B cell (primary cell): ENCODE measurements at regions of chr2 and their contacts with region 1.

Region 1: DNA sequence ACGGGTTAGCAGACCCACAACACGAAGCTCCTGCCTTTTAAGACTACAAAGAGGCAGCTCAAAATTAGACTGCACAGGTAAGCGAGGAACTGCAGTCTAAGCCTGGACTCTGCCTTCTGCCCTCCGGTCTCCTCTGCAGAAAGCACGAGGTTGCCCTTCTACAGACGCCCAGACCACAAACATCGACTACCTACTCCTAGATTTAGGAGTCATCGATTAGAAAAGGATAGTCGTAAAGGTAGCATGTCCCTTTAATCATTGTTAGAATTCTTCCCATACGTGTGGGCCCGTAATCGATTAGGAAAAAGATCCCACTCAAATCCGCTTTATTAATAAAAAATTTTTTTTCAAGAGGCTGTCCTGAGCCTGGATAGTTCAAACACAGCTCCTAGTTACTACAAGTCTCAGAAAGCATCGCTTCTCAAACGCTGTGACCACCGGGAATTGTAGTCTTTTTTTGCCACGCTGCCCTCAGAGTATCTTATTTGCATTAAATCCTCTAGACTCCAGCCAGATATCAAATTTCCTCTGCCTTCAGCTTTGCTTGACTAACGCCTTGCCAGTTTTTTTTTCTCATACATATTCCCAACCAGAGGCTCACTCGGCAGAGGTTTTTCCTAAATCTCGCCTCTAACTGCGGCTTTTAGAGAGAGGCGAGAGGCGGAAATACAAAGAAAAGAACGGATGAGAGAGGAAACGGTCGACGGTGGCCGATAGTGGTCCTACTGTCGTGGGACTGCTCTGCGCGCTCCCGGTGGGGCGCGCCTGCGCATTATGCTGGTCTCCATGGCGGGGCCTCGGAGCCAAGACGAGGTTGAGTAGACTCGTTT is at the starts of genes CARF and WDR12:
- DNase-seq: peak; percentile 96
- ATAC-seq: peak; percentile 81
- H3K4me3 ChIP-seq: peak within 1 kb of the TSS; percentile 52 to 100 (median 97)
- H3K4me3 Mint-ChIP-seq: peak within 1 kb of the TSS; percentile 99
- H3K27ac ChIP-seq: peak within 1 kb of the TSS; percentile 67 to 83
- H3K27ac Mint-ChIP-seq: peak within 1 kb of the TSS; percentile 99
- H3K4me1 ChIP-seq: peaks cover 5 to 11% of the 10 kb centered on the region in 2 donors
- H3K4me1 Mint-ChIP-seq: peaks cover 24% of the 10 kb centered on the region
- H3K27me3 ChIP-seq: no peaks in the 10 kb centered on the region
- H3K27me3 Mint-ChIP-seq: no peaks in the 10 kb centered on the region
- CTCF ChIP-seq: no peak
- total RNA-seq, gene CARF: 27.5 and 28.4 TPM in 2 replicates
- total RNA-seq, gene WDR12: 17.4 and 20.8 TPM in 2 replicates

Region 2: DNA sequence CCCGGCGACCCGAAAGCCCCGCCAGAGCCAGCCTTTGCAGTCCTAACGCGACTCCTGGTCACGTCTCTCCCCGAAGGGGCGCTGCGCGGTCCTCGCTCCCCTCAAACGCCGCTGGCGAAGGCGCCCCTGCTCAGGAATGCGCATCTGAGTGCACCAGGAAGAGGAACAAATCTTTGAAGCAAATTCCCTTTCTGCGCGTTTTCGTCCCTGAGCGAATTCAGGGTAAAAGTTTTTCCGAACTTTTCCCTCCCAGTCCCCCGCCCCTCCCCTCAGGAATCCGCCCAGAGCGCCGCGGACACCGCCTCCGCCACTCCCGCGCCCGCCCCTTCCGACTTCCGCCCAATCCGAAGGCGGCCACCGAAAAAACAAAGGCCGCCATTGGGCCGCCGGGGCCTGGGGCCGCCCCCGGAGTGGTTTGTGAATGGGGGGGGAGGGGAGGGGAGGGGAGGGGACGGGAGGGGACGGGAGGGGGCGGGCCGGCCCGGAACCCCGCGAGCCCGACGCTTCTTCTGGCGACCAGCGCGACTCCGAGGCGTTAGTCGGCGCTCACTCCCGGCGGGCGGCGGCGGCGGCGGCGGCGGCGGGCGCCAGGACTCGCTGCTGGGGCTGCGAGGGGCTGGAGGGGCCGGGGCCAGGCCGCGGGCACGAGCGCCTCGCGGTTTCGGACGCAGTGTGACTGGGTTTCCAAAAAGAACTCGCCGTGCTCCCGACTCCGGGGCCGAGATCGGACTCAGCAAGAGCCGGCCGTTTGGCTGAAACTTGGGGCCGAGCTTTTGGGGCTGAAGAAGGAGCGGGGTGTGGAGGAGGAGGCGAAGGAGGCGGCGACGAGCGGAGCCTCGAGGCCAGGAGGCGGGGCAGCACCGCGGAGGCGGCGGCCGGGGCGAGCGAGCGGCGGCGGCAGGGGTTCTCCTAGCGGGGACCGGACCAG is 878.1 kb before region 1 on chr2 and contains the start of gene FZD7:
- CTCF ChIA-PET with region 1: no interaction called
- POLR2A ChIA-PET with region 1: no interaction called
- intact Hi-C with region 1: loop called (anchors 10 kb)
- DNase-seq: peak; percentile 90
- ATAC-seq: peak; percentile 85
- H3K4me3 ChIP-seq: peak within 1 kb of the TSS; percentile 63 to 89 (median 75)
- H3K4me3 Mint-ChIP-seq: peak within 1 kb of the TSS; percentile 91
- H3K27ac ChIP-seq: no peak within 1 kb of the TSS
- H3K27ac Mint-ChIP-seq: peak within 1 kb of the TSS; percentile 78
- H3K4me1 ChIP-seq: peaks cover 20 to 25% of the 10 kb centered on the region in 2 donors
- H3K4me1 Mint-ChIP-seq: peaks cover 13% of the 10 kb centered on the region
- H3K27me3 ChIP-seq: peaks cover 0 to 43% (median 32%) of the 10 kb centered on the region in 4 experiments
- H3K27me3 Mint-ChIP-seq: peaks cover 22% of the 10 kb centered on the region
- CTCF ChIP-seq: no peak
- total RNA-seq, gene FZD7: 2.1 TPM in 2 replicates

Region 3: DNA sequence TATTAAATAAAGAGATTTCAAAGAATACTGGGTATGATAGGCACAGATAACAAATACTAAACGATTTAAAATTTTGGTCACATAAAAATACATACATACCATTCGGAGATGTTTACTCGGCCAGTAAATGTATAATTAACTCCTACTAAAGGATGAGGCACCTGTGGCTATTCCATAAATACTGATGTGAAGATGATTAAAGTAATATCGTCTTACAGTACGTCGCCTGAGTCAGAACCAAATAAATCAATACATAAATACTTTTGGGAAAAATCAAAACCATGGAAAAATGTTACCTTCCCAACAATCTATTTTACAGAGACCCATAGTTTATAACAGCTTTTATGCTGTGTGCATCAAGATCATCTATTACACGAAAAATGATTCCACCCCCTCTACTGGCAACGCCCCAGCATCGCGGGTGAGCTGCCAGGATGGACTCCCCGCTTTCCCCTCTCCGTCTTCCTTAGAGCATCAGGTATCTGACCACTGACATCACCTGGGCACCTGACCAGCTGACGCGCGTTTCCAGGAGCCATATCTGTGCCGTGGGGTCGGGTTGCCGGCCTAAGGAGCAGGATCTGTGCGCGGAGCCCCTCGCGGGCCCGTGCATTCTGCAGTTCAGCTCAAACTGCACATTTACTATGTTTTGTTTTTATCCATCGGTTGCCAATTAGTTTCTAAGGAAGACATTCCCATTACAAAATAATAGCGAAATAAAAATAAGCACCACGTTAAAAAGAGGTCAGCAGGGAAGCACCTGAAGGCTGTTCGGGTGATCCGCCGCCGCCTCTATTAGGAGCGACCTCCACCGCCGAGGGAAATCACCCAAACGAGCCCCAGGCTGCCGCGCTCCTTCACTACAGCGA is 41.1 kb before region 1 on chr2:
- CTCF ChIA-PET with region 1: interaction called, 13 read pairs
- POLR2A ChIA-PET with region 1: no interaction called
- intact Hi-C with region 1: loop called (anchors 1 kb)
- DNase-seq: peak; percentile 75
- ATAC-seq: peak; percentile 77
- H3K4me3 ChIP-seq: peak overlapping the region; percentile 46 to 75 (median 71)
- H3K4me3 Mint-ChIP-seq: peak overlapping the region; percentile 96
- H3K27ac ChIP-seq: peak overlapping the region; percentile 35 to 65
- H3K27ac Mint-ChIP-seq: peak overlapping the region; percentile 86
- H3K4me1 ChIP-seq: peaks cover 0 to 4% of the 10 kb centered on the region in 2 donors
- H3K4me1 Mint-ChIP-seq: peaks cover 6% of the 10 kb centered on the region
- H3K27me3 ChIP-seq: no peaks in the 10 kb centered on the region
- H3K27me3 Mint-ChIP-seq: no peaks in the 10 kb centered on the region
- CTCF ChIP-seq: peak; percentile 83

Region 4: DNA sequence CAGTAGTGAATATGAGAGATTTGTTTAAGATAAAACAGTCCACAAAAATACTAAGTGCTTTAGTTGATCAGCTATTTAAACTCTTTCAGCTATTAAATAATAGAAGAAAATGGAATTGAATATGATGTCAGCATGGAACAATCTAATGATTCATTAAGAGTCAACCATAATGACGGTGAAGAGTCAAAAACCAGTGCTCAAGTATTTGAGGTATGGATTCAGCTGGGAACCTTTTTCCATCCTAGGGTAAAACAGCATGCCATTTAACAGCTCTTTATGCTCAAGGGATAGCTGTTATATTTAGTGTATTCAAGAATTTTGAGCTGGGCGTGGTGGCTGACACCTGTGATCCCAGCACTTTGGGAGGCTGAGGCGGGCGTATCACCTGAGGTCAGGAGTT is 30.0 kb after region 1 on chr2:
- CTCF ChIA-PET with region 1: no interaction called
- POLR2A ChIA-PET with region 1: no interaction called
- intact Hi-C with region 1: no loop called
- DNase-seq: no peak
- ATAC-seq: no peak
- H3K4me3 ChIP-seq: no peak overlapping the region
- H3K4me3 Mint-ChIP-seq: no peak overlapping the region
- H3K27ac ChIP-seq: no peak overlapping the region
- H3K27ac Mint-ChIP-seq: no peak overlapping the region
- H3K4me1 ChIP-seq: no peaks in the 10 kb centered on the region
- H3K4me1 Mint-ChIP-seq: no peaks in the 10 kb centered on the region
- H3K27me3 ChIP-seq: no peaks in the 10 kb centered on the region
- H3K27me3 Mint-ChIP-seq: no peaks in the 10 kb centered on the region
- CTCF ChIP-seq: no peak

Region 5: DNA sequence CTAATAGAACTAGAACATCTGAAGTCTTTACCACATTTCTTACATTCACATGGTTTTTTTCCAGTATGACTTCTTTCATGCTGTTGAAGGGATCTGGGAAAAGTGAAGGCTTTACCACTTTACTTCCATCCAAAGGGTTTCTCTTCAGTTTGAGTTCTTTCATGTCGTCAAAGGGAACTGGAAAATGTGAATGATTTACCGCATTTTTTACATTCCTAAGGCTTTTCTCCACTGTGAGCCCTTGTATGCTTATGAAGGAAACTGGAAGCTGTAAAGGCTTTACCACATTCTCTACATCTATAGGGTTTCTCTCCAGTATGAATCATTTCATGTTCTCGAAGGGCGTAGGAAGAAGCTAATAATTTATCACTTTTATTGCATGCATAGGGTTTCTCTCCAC is 149.6 kb after region 1 on chr2:
- CTCF ChIA-PET with region 1: no interaction called
- POLR2A ChIA-PET with region 1: no interaction called
- intact Hi-C with region 1: no loop called
- DNase-seq: no peak
- ATAC-seq: no peak
- H3K4me3 ChIP-seq: no peak overlapping the region
- H3K4me3 Mint-ChIP-seq: no peak overlapping the region
- H3K27ac ChIP-seq: no peak overlapping the region
- H3K27ac Mint-ChIP-seq: no peak overlapping the region
- H3K4me1 ChIP-seq: no peaks in the 10 kb centered on the region
- H3K4me1 Mint-ChIP-seq: no peaks in the 10 kb centered on the region
- H3K27me3 ChIP-seq: no peaks in the 10 kb centered on the region
- H3K27me3 Mint-ChIP-seq: no peaks in the 10 kb centered on the region
- CTCF ChIP-seq: no peak

Region 6: DNA sequence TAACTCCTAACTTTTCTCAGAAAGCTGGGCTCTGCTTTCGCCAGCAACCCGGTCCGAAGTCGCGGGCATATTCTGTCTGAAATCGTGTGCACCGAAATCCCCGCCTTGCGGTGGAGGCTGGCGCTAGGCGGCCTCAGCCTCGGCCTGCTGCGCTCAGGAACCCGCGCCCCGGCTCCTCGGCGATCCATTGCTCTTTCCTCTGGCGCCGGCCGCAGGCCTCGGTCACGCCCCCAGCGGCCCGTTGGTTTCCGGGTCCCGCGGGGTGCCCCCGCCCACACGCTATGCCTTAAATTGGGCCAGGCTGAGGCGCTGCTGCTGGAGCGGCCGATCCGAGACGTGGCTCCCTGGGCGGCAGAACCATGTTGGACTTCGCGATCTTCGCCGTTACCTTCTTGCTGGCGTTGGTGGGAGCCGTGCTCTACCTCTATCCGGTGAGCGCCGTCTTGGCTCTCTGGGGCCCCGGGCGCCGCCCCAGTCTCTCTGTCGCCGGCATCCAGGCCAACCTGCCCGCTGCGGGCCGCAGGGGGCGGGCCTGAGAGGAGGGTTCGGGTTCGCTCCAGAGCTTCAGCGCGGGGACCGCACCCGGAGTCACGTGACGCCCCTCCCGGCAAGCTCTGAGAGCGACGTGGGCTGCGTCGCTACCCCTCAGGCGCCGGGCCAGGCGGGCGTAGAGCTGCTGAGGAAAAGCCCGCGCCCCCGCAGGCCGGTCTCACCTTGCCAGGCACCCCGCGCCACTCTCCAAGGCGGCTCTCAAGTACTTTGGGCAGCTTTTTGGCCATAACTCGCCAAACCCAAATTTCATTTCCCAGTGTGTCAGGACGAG is 327.2 kb after region 1 on chr2 and contains the start of gene CYP20A1:
- CTCF ChIA-PET with region 1: interaction called, 15 read pairs
- POLR2A ChIA-PET with region 1: interaction called, 10 read pairs
- intact Hi-C with region 1: loop called (anchors 1 kb)
- DNase-seq: peak; percentile 98
- ATAC-seq: peak; percentile 86
- H3K4me3 ChIP-seq: peak within 1 kb of the TSS; percentile 63 to 98 (median 95)
- H3K4me3 Mint-ChIP-seq: peak within 1 kb of the TSS; percentile 96
- H3K27ac ChIP-seq: peak within 1 kb of the TSS; percentile 88 to 94
- H3K27ac Mint-ChIP-seq: peak within 1 kb of the TSS; percentile 98
- H3K4me1 ChIP-seq: peaks cover 17 to 19% of the 10 kb centered on the region in 2 donors
- H3K4me1 Mint-ChIP-seq: peaks cover 31% of the 10 kb centered on the region
- H3K27me3 ChIP-seq: no peaks in the 10 kb centered on the region
- H3K27me3 Mint-ChIP-seq: no peaks in the 10 kb centered on the region
- CTCF ChIP-seq: no peak
- total RNA-seq, gene CYP20A1: 38.5 and 40.8 TPM in 2 replicates